HEK293 (cell line): ENCODE measurements at regions of chr19 and their contacts with region 1.

Region 1: GRCh38 chr19:40542202-40542859 is 34.3 kb upstream of the SHKBP1 start:
- H3K4me3 ChIP-seq: no peak overlapping the region
- H3K27ac ChIP-seq: no peak overlapping the region
- H3K4me1 ChIP-seq: peaks cover 4% of the 10 kb centered on the region; the same call in 1 of the 2 replicates
- CTCF ChIP-seq: no peak

Region 2: GRCh38 chr19:40507892-40508291 is 34.4 kb before region 1 on chr19:
- CTCF ChIA-PET with region 1: no interaction called
- POLR2A ChIA-PET with region 1: no interaction called
- H3K4me3 ChIP-seq: no peak overlapping the region
- H3K27ac ChIP-seq: no peak overlapping the region
- H3K4me1 ChIP-seq: no peaks in the 10 kb centered on the region
- CTCF ChIP-seq: no peak

Region 3: GRCh38 chr19:40553885-40554857 is 11.8 kb after region 1 on chr19:
- CTCF ChIA-PET with region 1: interaction called, 43 read pairs
- POLR2A ChIA-PET with region 1: interaction called, 6 read pairs
- H3K4me3 ChIP-seq: no peak overlapping the region
- H3K27ac ChIP-seq: no peak overlapping the region
- H3K4me1 ChIP-seq: peaks cover 7% of the 10 kb centered on the region
- CTCF ChIP-seq: no peak

Region 4: GRCh38 chr19:40598121-40598917 is 56.0 kb after region 1 on chr19:
- CTCF ChIA-PET with region 1: interaction called, 82 read pairs
- POLR2A ChIA-PET with region 1: interaction called, 4 read pairs
- H3K4me3 ChIP-seq: peak overlapping the region; percentile 33
- H3K27ac ChIP-seq: peak overlapping the region; percentile 60; the same call in 1 of the 2 replicates
- H3K4me1 ChIP-seq: peaks cover 57% of the 10 kb centered on the region
- CTCF ChIP-seq: peak; percentile 99

Region 5: GRCh38 chr19:40623403-40624251 is 81.3 kb after region 1 on chr19:
- CTCF ChIA-PET with region 1: interaction called, 14 read pairs
- POLR2A ChIA-PET with region 1: no interaction called
- H3K4me3 ChIP-seq: peak overlapping the region; percentile 0
- H3K27ac ChIP-seq: peak overlapping the region; percentile 59; the same call in 1 of the 2 replicates
- H3K4me1 ChIP-seq: peaks cover 16% of the 10 kb centered on the region
- CTCF ChIP-seq: no peak

Region 6: GRCh38 chr19:40691421-40692211 is 149.3 kb after region 1 on chr19:
- CTCF ChIA-PET with region 1: no interaction called
- POLR2A ChIA-PET with region 1: no interaction called
- H3K4me3 ChIP-seq: no peak overlapping the region
- H3K27ac ChIP-seq: peak overlapping the region; percentile 80; the same call in 1 of the 2 replicates
- H3K4me1 ChIP-seq: peaks cover 16% of the 10 kb centered on the region
- CTCF ChIP-seq: peak; percentile 22; the same call in 1 of the 2 replicates

Region 7: GRCh38 chr19:40995355-40995754 is 453.0 kb after region 1 on chr19:
- CTCF ChIA-PET with region 1: no interaction called
- POLR2A ChIA-PET with region 1: no interaction called
- H3K4me3 ChIP-seq: no peak overlapping the region
- H3K27ac ChIP-seq: no peak overlapping the region
- H3K4me1 ChIP-seq: no peaks in the 10 kb centered on the region
- CTCF ChIP-seq: no peak